CD14-positive monocyte (primary cell): ENCODE measurements at regions of chr15 and their contacts with region 1.

Region 1: DNA sequence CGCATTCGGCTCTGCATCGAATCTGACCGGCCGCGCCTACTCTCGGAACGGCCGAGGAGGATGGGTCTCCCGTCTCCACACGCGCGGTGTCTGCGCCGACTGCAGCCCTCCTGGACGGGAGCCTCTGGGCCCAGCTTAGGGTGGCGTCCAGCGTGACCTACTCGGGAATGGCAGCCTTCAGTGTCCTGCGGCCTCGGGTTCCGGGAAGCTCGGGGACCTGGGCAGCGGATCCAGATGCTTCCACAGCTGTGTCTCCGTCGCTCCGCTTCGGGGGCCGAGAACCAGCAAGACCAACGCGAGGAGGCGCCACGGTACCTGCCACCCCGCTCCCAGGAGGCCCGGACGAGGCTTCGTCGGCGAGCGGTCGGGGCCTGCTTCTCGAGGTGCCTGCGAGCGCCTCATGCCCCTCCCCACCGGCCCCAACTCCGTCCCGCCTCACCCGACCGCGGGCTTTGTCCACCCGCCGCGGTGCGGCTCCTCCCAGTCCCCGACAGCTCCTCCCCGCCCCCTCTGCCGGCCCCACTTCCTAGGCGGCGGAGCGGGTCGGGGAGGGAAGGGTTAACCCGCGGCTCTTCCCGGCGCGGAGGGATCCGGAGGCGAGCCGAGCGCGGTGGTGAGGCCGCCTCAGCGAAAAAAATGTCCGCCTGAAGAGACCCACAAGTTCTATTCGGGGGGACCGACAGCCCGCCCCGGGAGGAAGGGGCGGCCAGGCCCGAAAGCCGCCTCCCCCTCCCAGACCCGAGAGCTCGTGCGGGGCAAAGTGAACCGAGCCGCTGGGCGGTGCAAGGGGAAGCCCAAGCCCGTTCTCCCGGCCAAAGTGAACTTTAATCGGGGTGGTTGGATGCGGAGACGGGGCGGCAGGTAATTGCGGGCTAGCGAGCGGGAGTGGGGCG is at the start of gene TCF12:
- DNase-seq: peak; percentile 81 to 92 (median 89)
- H3K4me3 ChIP-seq: peak within 1 kb of the TSS; percentile 70 to 96 (median 93)
- H3K4me3 Mint-ChIP-seq: peak within 1 kb of the TSS; percentile 92 to 97
- H3K27ac ChIP-seq: peak within 1 kb of the TSS; percentile 95 to 97
- H3K27ac Mint-ChIP-seq: peak within 1 kb of the TSS; percentile 78 to 93 (median 89)
- H3K4me1 ChIP-seq: peaks cover 17 to 29% of the 10 kb centered on the region in 2 donors
- H3K4me1 Mint-ChIP-seq: peaks cover 34% of the 10 kb centered on the region
- H3K27me3 ChIP-seq: no peaks in the 10 kb centered on the region
- H3K27me3 Mint-ChIP-seq: no peaks in the 10 kb centered on the region
- CTCF ChIP-seq: peak; percentile 35
- polyA plus RNA-seq, gene TCF12: 15.8 to 52.5 (median 27.6) TPM

Region 2: GRCh38 chr15:56390739-56391267 is 527.5 kb before region 1 on chr15:
- intact Hi-C with region 1: no loop called
- DNase-seq: no peak
- H3K4me3 ChIP-seq: no peak overlapping the region
- H3K4me3 Mint-ChIP-seq: no peak overlapping the region
- H3K27ac ChIP-seq: no peak overlapping the region
- H3K27ac Mint-ChIP-seq: no peak overlapping the region
- H3K4me1 ChIP-seq: no peaks in the 10 kb centered on the region
- H3K4me1 Mint-ChIP-seq: no peaks in the 10 kb centered on the region
- H3K27me3 ChIP-seq: no peaks in the 10 kb centered on the region
- H3K27me3 Mint-ChIP-seq: no peaks in the 10 kb centered on the region
- CTCF ChIP-seq: no peak

Region 3: DNA sequence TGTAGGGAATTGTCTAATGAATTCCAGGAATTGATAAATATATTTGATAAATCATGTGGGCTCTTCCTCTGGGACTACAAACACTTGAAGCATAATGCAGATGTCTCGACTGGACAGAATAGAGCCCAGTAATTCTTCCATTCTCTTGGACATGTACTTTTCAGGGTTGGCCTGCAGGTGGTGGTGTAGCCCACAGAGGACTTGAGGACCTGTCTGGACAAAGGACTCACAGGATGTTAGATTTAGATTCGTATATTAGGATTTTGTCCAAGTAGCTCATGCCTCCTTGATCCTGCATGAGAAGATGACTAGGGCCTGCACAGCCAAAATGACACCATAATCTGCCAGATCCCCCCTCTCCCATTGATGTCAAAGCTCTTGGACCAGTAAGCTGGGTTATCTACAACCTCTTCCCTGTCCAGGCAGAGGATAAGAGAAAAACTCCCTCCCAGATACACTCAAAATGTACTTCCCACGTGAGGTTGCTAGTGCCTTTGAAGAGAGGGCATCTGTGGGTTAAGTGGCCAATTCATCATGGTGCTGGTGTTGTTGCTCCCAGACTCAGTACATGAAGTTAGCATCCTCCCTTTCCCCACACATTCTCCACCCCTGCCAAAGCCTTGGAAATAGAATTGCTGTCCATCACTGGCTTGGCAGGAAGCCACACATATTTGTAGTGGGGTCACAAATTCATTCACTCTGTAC is 96.4 kb before region 1 on chr15:
- intact Hi-C with region 1: no loop called
- DNase-seq: peak; percentile 24 to 50 (median 40)
- H3K4me3 ChIP-seq: no peak overlapping the region
- H3K4me3 Mint-ChIP-seq: no peak overlapping the region
- H3K27ac ChIP-seq: no peak overlapping the region
- H3K27ac Mint-ChIP-seq: no peak overlapping the region
- H3K4me1 ChIP-seq: no peaks in the 10 kb centered on the region
- H3K4me1 Mint-ChIP-seq: peaks cover 8% of the 10 kb centered on the region
- H3K27me3 ChIP-seq: no peaks in the 10 kb centered on the region
- H3K27me3 Mint-ChIP-seq: no peaks in the 10 kb centered on the region
- CTCF ChIP-seq: peak; percentile 66

Region 4: DNA sequence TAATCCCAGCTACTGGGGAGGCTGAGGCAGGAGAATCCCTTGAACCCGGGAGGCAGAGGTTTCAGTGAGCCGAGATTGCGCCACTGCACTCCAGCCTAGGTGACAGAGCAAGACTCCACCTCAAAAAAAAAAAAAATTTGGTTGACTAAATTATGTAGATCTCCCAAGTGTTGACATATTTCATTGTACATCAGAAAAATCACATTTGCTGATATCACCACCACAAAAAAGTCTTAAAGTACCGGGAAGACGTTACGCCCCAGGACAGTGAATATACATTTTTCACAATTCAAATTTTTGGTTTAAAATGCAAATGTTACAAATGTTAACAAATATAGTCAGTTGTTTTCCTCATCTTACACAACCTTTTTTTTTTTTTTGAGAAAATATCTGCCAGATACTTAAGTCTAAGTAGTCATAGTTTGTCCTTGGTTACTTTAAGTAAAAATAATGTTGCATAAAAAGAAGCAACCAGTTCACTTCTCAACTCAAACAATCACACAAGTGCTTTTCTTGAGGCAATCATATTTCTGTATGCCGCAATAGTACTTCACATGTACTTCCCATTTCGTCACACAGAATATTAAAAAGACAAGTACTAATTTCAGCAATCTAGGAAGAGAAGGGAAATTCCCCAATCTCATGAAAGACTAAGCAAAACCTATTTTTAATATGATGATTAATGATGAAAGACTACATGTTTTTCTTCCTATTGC is 40.9 kb before region 1 on chr15:
- intact Hi-C with region 1: loop called in 1 of 2 experiments (anchors 5 kb)
- DNase-seq: peak; percentile 86 to 95 (median 94)
- H3K4me3 ChIP-seq: no peak overlapping the region
- H3K4me3 Mint-ChIP-seq: no peak overlapping the region
- H3K27ac ChIP-seq: peak overlapping the region; percentile 69 to 75
- H3K27ac Mint-ChIP-seq: peak overlapping the region; percentile 84 to 97 (median 88)
- H3K4me1 ChIP-seq: peaks cover 11 to 15% of the 10 kb centered on the region in 2 donors
- H3K4me1 Mint-ChIP-seq: peaks cover 6% of the 10 kb centered on the region
- H3K27me3 ChIP-seq: no peaks in the 10 kb centered on the region
- H3K27me3 Mint-ChIP-seq: peaks cover 0 to 2% (median 0%) of the 10 kb centered on the region in 3 donors
- CTCF ChIP-seq: no peak

Region 5: GRCh38 chr15:56886932-56887781 is 31.1 kb before region 1 on chr15:
- intact Hi-C with region 1: loop called (anchors 1 to 2 kb)
- DNase-seq: peak; percentile 90 to 94 (median 91)
- H3K4me3 ChIP-seq: peak overlapping the region; percentile 66 to 80 (median 78)
- H3K4me3 Mint-ChIP-seq: peak overlapping the region; percentile 85 to 89
- H3K27ac ChIP-seq: peak overlapping the region; percentile 89 to 93
- H3K27ac Mint-ChIP-seq: peak overlapping the region; percentile 92 to 97 (median 96)
- H3K4me1 ChIP-seq: peaks cover 22 to 30% of the 10 kb centered on the region in 2 donors
- H3K4me1 Mint-ChIP-seq: peaks cover 28% of the 10 kb centered on the region
- H3K27me3 ChIP-seq: no peaks in the 10 kb centered on the region
- H3K27me3 Mint-ChIP-seq: no peaks in the 10 kb centered on the region
- CTCF ChIP-seq: no peak

Region 6: DNA sequence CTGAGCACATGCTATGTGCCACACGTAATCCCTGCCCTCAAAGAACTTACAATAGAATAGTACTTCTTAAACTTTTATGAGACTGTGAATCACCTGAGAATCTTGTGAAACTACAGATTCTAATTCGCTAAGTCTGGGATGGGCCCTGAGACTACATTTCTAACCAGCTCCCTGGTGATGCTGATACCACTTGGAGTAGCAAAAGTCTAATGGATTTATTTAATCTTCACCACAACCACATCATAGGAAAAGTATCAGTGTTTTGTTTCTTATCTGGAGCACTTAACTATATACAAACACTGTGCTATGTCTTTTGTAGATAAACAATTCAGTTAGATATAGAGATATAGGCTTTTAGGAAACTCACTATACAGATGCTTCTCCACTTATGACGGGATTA is 23.7 kb before region 1 on chr15:
- intact Hi-C with region 1: loop called in 1 of 2 experiments (anchors 2 kb)
- DNase-seq: no peak
- H3K4me3 ChIP-seq: no peak overlapping the region
- H3K4me3 Mint-ChIP-seq: no peak overlapping the region
- H3K27ac ChIP-seq: no peak overlapping the region
- H3K27ac Mint-ChIP-seq: no peak overlapping the region
- H3K4me1 ChIP-seq: no peaks in the 10 kb centered on the region
- H3K4me1 Mint-ChIP-seq: no peaks in the 10 kb centered on the region
- H3K27me3 ChIP-seq: no peaks in the 10 kb centered on the region
- H3K27me3 Mint-ChIP-seq: peaks cover 0 to 1% (median 0%) of the 10 kb centered on the region in 3 donors
- CTCF ChIP-seq: no peak